ENCODE measurements at regions of chr11 and their contacts with region 1.

Region 1: GRCh38 chr11:21082853-21083252 is 413.5 kb downstream of the NELL1 start:
- DNase-seq: no peak
- H3K4me3 ChIP-seq: no peak overlapping the region
- H3K27ac ChIP-seq: no peak overlapping the region
- H3K4me1 ChIP-seq: no peaks in the 10 kb centered on the region
- H3K27me3 ChIP-seq: no peaks in the 10 kb centered on the region
- CTCF ChIP-seq: no peak
- POLR2A ChIP-seq: no peak

Region 2: DNA sequence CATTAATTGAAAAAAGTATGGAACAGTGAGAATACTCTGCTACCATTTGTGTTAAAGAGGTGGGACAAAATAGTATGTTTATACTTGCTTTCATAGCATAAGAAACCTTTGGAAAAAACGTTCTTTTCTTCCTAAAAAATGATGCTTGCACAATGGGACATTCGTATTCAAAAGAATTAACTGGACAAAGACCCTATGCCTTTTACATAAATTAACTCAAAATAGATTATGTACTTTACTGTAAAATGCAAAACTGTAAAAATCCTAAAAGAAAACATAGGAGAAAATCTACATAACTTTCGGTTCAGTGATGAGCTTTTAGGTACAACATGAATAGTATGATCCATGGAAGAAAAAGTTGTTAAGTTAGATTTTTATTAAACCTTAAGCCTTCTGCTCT is 247.3 kb before region 1 on chr11:
- intact Hi-C with region 1: no loop called
- DNase-seq: no peak
- H3K4me3 ChIP-seq: no peak overlapping the region
- H3K27ac ChIP-seq: no peak overlapping the region
- H3K4me1 ChIP-seq: no peaks in the 10 kb centered on the region
- H3K27me3 ChIP-seq: no peaks in the 10 kb centered on the region
- CTCF ChIP-seq: no peak
- POLR2A ChIP-seq: no peak

Region 3: DNA sequence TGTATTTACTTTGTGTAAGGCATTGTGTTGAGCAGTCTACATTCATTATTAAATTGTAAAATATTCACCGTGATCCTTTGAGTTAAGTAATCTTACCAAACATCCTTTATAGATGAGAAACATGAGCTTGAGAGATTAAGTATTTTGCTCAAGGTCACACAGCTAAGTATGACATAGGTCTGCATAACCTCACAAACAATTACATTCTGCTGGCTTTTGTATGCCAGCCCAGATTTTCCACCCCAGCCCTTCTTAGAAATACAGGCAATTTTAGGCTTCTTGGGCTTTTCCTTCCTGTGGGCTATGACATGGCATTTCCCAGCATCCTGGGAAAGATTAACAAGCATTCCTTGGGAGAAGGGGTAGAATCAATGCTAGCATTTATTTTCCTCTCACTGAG is 56.2 kb before region 1 on chr11:
- intact Hi-C with region 1: loop called (anchors 10 kb)
- DNase-seq: no peak
- H3K4me3 ChIP-seq: no peak overlapping the region
- H3K27ac ChIP-seq: no peak overlapping the region
- H3K4me1 ChIP-seq: no peaks in the 10 kb centered on the region
- H3K27me3 ChIP-seq: no peaks in the 10 kb centered on the region
- CTCF ChIP-seq: no peak
- POLR2A ChIP-seq: no peak

Region 4: GRCh38 chr11:22115470-22116029 is 1032.7 kb after region 1 on chr11:
- intact Hi-C with region 1: no loop called
- DNase-seq: no peak
- H3K4me3 ChIP-seq: no peak overlapping the region
- H3K27ac ChIP-seq: no peak overlapping the region
- H3K4me1 ChIP-seq: no peaks in the 10 kb centered on the region
- H3K27me3 ChIP-seq: no peaks in the 10 kb centered on the region
- CTCF ChIP-seq: no peak
- POLR2A ChIP-seq: no peak

Measured in spleen (tissue), 13 donors.